H1 (cell line): ENCODE measurements at regions of chr6 and their contacts with region 1.

Region 1: DNA sequence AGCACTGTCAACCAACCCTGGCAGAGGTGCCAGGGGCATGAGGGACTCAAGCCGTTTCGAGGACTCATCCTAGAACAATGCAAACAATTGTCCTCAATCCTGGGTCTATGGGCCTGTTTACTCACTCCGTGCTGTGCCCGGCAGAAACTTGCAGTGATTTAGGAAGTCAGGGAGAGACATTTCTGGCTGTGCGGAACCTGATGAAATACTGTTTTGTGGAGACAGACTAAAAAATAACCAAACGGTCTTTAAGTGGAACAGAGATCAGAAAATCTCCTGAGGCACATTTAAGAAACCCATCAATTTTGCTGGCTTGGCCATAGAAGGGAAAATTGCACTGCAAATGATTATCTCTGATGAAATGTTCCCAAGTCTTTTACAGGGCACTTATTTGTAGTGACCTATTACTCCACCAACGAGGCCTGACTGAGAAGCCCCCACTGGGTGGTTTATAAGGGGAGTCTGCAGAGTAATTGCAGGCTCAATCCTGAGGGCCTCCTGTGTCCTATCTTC is 79.8 kb upstream of the KCNK16 start:
- DNase-seq: no peak
- H3K4me3 ChIP-seq: no peak overlapping the region
- H3K27ac ChIP-seq: no peak overlapping the region
- H3K4me1 ChIP-seq: no peaks in the 10 kb centered on the region
- H3K27me3 ChIP-seq: no peaks in the 10 kb centered on the region
- CTCF ChIP-seq: no peak
- EP300 ChIP-seq: no peak
- POLR2A ChIP-seq: no peak
- RAD21 ChIP-seq: no peak

Region 2: GRCh38 chr6:39389484-39389767 is 12.9 kb before region 1 on chr6:
- CTCF ChIA-PET with region 1: interaction called, 30 read pairs
- POLR2A ChIA-PET with region 1: no interaction called
- DNase-seq: no peak
- H3K4me3 ChIP-seq: no peak overlapping the region
- H3K27ac ChIP-seq: no peak overlapping the region
- H3K4me1 ChIP-seq: no peaks in the 10 kb centered on the region
- H3K27me3 ChIP-seq: no peaks in the 10 kb centered on the region
- CTCF ChIP-seq: peak; percentile 46 to 71 (median 61)
- EP300 ChIP-seq: no peak
- POLR2A ChIP-seq: no peak
- RAD21 ChIP-seq: peak; percentile 81 to 88